GM10248 (cell line): ENCODE measurements at regions of chr4 and their contacts with region 1.

Region 1: GRCh38 chr4:48578132-48578968 is 88.3 kb downstream of the ZAR1 start:
- DNase-seq: peak; percentile 38
- CTCF ChIP-seq: peak; percentile 82

Region 2: DNA sequence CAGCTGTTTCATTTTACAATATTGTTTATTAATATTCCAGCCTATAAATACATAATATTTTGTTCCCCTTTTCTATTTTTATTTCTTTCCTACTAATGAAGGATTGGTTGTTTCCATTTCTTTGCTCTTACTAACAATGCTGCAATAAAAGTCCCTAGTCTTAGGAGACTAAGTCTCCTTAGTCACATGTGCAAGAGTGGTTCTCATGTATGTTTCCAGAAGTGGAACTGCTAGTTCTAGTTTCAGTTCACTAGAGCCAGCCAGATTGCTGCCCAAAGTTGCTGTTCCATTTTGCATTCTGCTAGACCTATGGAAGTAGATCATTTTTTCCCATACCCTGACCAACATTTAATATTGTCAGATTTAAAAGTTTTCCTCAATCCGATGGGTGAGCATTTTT is 606.2 kb before region 1 on chr4:
- CTCF ChIA-PET with region 1: no interaction called
- POLR2A ChIA-PET with region 1: no interaction called
- DNase-seq: peak; percentile 31
- CTCF ChIP-seq: no peak

Region 3: DNA sequence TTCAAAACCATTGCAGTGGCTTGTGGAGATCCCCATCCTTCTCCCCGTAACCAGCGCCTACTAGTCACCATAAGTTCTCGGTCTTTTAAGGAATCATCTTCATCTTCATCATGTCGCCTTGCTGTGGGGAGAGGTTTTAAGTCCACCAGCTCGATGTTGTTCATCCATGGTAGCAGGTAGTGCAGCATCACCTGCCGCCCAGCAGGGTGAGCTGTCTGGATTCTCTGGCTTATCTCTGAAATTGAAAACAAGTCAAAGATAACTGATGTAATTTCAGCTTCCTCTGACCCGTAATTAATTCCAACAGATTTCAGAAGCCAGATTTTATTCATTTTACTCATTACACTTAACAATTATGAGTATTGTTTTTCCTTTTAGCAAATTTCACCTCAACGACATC is 20.9 kb before region 1 on chr4:
- CTCF ChIA-PET with region 1: interaction called, 23 read pairs
- POLR2A ChIA-PET with region 1: no interaction called
- DNase-seq: no peak
- CTCF ChIP-seq: no peak

Region 4: GRCh38 chr4:48591372-48591771 is 13.0 kb after region 1 on chr4:
- CTCF ChIA-PET with region 1: interaction called, 13 read pairs
- POLR2A ChIA-PET with region 1: no interaction called
- DNase-seq: no peak
- CTCF ChIP-seq: no peak

Region 5: DNA sequence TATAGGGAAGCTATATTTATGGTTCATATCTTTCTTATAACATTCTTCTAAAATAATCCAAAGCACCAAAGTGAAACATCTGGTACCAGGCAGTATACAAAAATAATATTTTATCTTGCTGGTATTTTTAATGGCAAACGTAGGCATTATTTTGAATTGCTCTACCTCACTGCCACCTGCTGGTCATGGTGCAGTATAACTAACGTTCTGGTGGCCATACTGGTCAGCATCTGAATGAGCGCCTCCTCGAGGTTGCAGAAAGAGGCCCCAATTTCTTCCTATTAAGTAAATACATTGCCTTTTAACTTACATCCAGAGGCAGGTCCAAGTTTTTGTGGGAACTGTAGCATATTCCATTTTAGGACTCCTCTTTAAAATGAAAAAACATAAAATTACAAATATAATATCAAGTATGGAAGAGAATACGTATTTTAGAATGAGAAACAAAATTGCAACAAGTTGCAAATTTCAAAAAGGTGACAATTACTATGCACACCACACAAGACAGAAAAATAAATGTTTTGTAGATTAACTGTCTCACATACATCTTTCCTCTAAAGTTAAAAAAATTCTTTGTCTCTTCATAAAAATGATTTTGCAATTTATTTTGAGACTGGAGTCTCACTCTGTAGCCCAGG is 384.8 kb after region 1 on chr4:
- CTCF ChIA-PET with region 1: interaction called, 59 read pairs
- POLR2A ChIA-PET with region 1: no interaction called
- DNase-seq: peak; percentile 66
- CTCF ChIP-seq: peak; percentile 98